ENCODE measurements at regions of chr13 and their contacts with region 1.

Region 1: DNA sequence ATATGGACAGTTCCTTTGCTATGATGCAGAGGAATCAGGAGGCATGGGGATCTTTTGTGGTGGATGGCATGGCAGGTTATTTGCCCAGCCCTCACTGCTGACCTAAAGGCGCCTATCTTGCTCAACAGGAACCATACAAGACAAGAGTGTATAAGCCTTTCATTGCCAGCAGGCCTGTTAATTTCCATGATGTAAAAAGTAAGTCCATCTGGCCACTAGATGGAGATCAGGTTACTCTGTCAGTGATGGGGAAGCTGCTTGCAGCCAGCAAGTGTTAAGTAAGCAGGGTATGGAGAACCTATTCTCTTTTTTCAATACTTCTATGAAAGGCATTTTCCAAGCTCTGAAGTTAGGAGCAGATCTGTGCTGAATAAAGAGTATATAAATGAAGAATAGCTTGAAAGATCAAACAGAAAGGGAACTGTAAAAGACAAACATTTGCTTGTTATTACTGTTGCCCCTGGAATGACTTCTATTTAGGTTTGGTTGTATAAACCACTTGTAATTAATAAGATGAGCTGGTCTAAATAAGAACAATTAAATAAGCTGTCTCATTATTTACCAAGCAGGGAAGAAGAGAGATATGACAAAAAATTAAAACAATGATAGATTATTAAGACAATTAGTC is 210.9 kb downstream of the RGCC start:
- DNase-seq: peak; percentile 37
- ATAC-seq: peak; percentile 92
- H3K4me3 Mint-ChIP-seq: no peak overlapping the region
- H3K27ac Mint-ChIP-seq: no peak overlapping the region
- H3K4me1 Mint-ChIP-seq: no peaks in the 10 kb centered on the region
- H3K27me3 Mint-ChIP-seq: no peaks in the 10 kb centered on the region

Region 2: DNA sequence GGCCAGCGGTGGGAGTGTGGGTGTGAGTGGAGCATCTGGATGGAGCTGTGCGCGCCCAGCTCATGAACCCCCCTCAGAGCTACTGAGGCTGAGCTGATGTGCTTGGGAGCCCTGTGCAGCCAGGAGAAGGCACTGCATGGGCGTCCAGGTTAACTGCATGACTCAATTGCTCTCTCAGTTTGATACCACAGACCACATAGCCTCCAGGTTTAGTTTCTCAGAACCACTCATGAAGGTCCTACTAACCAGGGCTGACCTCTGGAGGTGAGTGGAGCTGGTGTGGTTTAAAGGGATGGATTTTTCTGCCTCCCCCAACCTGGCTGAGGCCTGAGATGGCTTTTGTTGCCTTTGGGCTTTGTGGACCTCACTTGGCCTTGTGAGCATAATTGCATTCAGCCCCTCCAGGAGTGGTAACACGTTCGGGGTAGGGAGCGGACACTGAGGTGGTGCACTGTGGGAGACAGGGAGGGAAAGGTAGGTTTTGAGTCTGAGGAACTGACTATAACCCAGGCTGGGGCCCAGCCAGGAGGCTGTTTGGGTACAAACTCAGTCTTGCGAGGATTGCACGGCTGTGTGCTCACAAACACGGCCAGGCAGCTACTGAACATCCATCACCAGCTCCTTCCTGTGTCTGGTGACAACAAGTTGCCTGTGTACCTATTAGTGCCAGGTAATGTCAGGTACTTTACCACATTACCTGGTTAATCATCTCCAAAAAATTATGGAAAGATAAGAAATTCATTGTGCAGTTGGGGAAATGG is 113.4 kb before region 1 on chr13:
- CTCF ChIA-PET with region 1: no interaction called
- POLR2A ChIA-PET with region 1: no interaction called
- intact Hi-C with region 1: no loop called
- DNase-seq: peak; percentile 67
- ATAC-seq: peak; percentile 96
- H3K4me3 Mint-ChIP-seq: no peak overlapping the region
- H3K27ac Mint-ChIP-seq: no peak overlapping the region
- H3K4me1 Mint-ChIP-seq: peaks cover 6% of the 10 kb centered on the region
- H3K27me3 Mint-ChIP-seq: no peaks in the 10 kb centered on the region

Region 3: DNA sequence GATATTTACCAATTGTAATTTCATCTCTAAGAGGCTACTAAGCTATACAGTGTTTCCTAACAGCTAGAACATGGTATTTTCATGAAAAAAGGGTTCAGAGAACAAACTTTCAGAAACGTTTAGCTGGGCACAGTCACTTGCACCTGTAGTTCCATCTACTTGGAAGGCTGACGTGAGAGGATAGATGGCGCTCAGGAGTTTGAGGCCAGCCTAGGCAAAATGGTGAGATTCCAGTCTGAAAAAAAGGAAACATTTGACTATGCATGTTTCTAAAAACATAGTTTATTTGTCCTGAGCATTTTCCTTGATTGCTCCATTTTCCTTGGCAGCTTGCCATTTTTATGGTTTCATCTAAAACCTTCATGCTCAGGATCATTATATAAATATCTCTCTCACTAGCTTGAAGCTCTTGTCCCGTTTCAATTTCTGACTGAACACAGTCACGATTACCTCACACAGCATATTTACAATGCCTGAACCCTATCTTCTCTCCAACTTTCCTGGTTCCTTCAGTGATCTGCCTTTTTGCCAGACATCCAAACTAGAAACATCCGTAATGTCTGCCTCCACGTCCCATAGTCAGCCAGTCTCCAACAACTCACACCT is 10.1 kb before region 1 on chr13:
- CTCF ChIA-PET with region 1: interaction called, 30 read pairs
- POLR2A ChIA-PET with region 1: no interaction called
- intact Hi-C with region 1: no loop called
- DNase-seq: no peak
- ATAC-seq: no peak
- H3K4me3 Mint-ChIP-seq: no peak overlapping the region
- H3K27ac Mint-ChIP-seq: no peak overlapping the region
- H3K4me1 Mint-ChIP-seq: peaks cover 21% of the 10 kb centered on the region
- H3K27me3 Mint-ChIP-seq: no peaks in the 10 kb centered on the region

Region 4: DNA sequence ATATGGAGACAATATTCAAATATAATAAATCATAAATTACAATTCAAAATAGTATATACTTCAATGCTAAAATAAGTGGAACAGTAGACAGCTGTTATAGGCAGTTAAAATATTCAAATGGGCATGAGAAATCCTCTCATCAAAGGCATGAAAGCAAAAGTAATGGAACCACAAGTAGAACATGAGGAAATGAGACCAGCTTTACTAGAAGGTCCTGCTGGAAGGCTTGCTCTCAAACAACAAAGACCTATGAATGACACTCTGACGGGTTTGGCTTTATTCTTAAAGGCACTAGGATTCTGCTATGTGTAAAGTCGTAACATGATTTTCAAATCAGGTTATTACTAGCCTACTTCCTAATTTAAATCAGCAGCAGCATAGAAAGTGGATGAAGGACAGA is 144.6 kb after region 1 on chr13:
- CTCF ChIA-PET with region 1: interaction called, 10 read pairs
- POLR2A ChIA-PET with region 1: no interaction called
- intact Hi-C with region 1: no loop called
- DNase-seq: no peak
- ATAC-seq: peak; percentile 19
- H3K4me3 Mint-ChIP-seq: no peak overlapping the region
- H3K27ac Mint-ChIP-seq: no peak overlapping the region
- H3K4me1 Mint-ChIP-seq: peaks cover 7% of the 10 kb centered on the region
- H3K27me3 Mint-ChIP-seq: no peaks in the 10 kb centered on the region

Region 5: DNA sequence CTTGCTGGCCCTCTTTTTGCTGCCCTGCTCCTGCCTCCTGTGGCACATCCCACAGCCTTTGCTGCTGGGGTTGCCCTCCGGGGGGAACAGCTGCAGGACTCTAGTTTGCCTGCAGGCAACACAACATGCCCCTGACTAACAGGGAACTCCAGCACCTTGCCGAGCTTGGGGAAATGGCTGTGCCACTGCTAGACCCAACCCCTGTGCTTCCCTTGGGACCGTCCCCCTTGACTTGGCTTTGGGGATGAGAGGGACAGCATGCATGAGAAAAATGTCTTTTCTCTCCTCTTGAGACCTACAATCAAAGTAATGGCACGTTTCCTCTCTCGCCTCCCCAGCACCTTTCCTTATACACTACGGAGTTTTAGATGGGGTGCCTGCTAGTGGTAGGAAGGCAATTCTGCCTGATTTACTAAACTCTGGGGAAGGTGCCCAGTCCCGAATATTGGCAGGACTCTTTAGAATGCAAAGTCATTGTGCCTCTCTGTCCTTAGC is 305.1 kb after region 1 on chr13:
- CTCF ChIA-PET with region 1: no interaction called
- POLR2A ChIA-PET with region 1: no interaction called
- intact Hi-C with region 1: no loop called
- DNase-seq: no peak
- ATAC-seq: no peak
- H3K4me3 Mint-ChIP-seq: no peak overlapping the region
- H3K27ac Mint-ChIP-seq: no peak overlapping the region
- H3K4me1 Mint-ChIP-seq: peaks cover 12% of the 10 kb centered on the region
- H3K27me3 Mint-ChIP-seq: peaks cover 2% of the 10 kb centered on the region

Region 6: GRCh38 chr13:42110410-42111155 is 442.3 kb after region 1 on chr13:
- CTCF ChIA-PET with region 1: interaction called, 20 read pairs
- POLR2A ChIA-PET with region 1: no interaction called
- intact Hi-C with region 1: loop called (anchors 1 kb)
- DNase-seq: peak; percentile 47
- ATAC-seq: peak; percentile 69
- H3K4me3 Mint-ChIP-seq: no peak overlapping the region
- H3K27ac Mint-ChIP-seq: peak overlapping the region; percentile 29
- H3K4me1 Mint-ChIP-seq: peaks cover 5% of the 10 kb centered on the region
- H3K27me3 Mint-ChIP-seq: no peaks in the 10 kb centered on the region

Region 7: DNA sequence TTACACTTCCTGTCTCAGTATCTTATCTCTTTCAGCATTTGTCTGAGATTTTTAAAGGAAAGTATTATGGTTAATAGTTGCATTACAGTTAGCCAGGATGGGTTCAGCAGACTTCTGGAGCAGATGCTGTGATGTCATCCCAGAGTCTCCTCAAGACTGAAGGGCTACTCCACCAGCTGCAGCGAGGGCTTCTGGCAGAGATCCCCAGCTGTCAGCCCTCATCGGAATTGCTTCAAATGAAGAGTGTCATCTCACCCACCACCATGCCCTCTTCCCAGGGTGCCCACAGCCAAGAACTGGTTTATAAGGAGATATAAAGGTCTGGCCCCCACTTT is 1197.5 kb after region 1 on chr13:
- CTCF ChIA-PET with region 1: no interaction called
- POLR2A ChIA-PET with region 1: no interaction called
- intact Hi-C with region 1: no loop called
- DNase-seq: no peak
- ATAC-seq: no peak
- H3K4me3 Mint-ChIP-seq: no peak overlapping the region
- H3K27ac Mint-ChIP-seq: no peak overlapping the region
- H3K4me1 Mint-ChIP-seq: no peaks in the 10 kb centered on the region
- H3K27me3 Mint-ChIP-seq: peaks cover 8% of the 10 kb centered on the region

Measured in activated CD4-positive, alpha-beta T cell treated with anti-CD3 and anti-CD28 coated beads for 36 hours (primary cell).